Activated B cell treated with CpG ODN at 0.5 μM for 24 hours (primary cell): ENCODE measurements at regions of chr7 and their contacts with region 1.

Region 1: GRCh38 chr7:108569381-108570145 is at the starts of genes DNAJB9 and THAP5:
- DNase-seq: peak; percentile 97
- ATAC-seq: peak; percentile 89
- H3K4me3 Mint-ChIP-seq: peak within 1 kb of the TSS; percentile 98
- H3K27ac Mint-ChIP-seq: peak within 1 kb of the TSS; percentile 99
- H3K4me1 Mint-ChIP-seq: peaks cover 66% of the 10 kb centered on the region
- H3K27me3 Mint-ChIP-seq: no peaks in the 10 kb centered on the region
- CTCF ChIP-seq: no peak
- total RNA-seq, gene DNAJB9: 9.0 and 9.9 TPM in 2 replicates
- total RNA-seq, gene THAP5: 22.1 and 26.3 TPM in 2 replicates

Region 2: DNA sequence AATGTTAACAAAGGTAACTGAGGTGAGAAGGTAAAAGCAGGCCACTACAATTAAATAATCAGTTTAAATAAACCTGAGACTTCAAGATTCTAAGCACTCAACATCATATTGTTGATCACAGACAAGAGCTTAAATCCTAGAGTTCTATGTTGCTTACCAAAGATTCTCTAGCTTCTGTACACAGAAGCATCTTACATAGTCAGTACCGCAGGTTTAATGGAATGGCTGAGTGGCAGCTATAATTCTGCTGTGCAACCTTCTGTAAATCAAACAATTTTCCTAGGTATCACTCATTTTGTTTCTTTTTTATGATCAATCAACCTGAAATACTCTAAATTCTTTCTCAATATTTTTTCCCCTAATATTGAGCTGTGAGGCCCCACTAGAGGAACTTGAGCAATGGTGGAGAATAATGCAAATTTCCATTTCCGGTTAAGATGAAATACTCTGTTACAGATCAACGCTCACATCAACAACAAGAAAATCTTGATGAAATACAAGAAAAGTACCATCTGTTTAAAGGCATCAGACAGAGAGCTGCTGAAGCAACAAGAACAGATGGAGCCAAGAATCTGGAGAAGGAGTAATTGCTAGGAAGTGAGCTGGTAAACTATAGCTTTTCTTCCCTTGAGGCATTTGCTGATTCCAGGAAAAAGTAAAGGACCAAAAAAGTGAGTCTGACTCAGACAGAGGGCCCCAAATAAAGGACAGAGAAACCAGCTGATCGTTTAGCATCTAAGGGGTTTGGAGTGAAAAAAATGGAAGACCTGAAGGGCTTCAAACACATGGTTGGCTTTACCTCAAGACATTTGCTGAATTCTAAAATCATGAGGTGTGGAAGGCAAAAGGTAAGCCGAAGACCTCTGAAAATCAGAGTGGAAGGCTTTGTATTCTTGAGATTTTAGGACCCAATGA is 66.2 kb before region 1 on chr7:
- CTCF ChIA-PET with region 1: interaction called, 5 read pairs
- POLR2A ChIA-PET with region 1: interaction called, 94 read pairs
- intact Hi-C with region 1: loop called (anchors 1 kb)
- DNase-seq: no peak
- ATAC-seq: peak; percentile 95
- H3K4me3 Mint-ChIP-seq: peak overlapping the region; percentile 74
- H3K27ac Mint-ChIP-seq: peak overlapping the region; percentile 100
- H3K4me1 Mint-ChIP-seq: peaks cover 51% of the 10 kb centered on the region
- H3K27me3 Mint-ChIP-seq: no peaks in the 10 kb centered on the region
- CTCF ChIP-seq: no peak